Gastrocnemius medialis (tissue), 4 donors: ENCODE measurements at regions of chrX and their contacts with region 1.

Region 1: GRCh38 chrX:120560842-120561633 is at the start of gene CUL4B:
- DNase-seq: peak; percentile 85 to 92
- ATAC-seq: peak; percentile 91 to 94
- H3K4me3 ChIP-seq: peak within 1 kb of the TSS; percentile 72 to 86 (median 78)
- H3K27ac ChIP-seq: peak within 1 kb of the TSS; percentile 97 to 100 (median 98)
- H3K4me1 ChIP-seq: peaks cover 23 to 24% of the 10 kb centered on the region in 2 donors
- H3K27me3 ChIP-seq: no peaks in the 10 kb centered on the region
- CTCF ChIP-seq: no peak
- POLR2A ChIP-seq: peak; percentile 62 to 73
- total RNA-seq, gene CUL4B: 10.1 to 14.6 (median 11.9) TPM

Region 2: GRCh38 chrX:118974088-118974907 is 1586.7 kb before region 1 on chrX and contains the start of gene LONRF3:
- in situ Hi-C with region 1: no loop called
- intact Hi-C with region 1: loop called (anchors 10 kb)
- DNase-seq: peak; percentile 73 to 85
- ATAC-seq: peak; percentile 61 to 65
- H3K4me3 ChIP-seq: peak within 1 kb of the TSS; percentile 69 to 82 (median 74)
- H3K27ac ChIP-seq: peak within 1 kb of the TSS; percentile 93 to 95 (median 93)
- H3K4me1 ChIP-seq: peaks cover 5 to 10% of the 10 kb centered on the region in 2 donors
- H3K27me3 ChIP-seq: no peaks in the 10 kb centered on the region
- CTCF ChIP-seq: no peak
- POLR2A ChIP-seq: peak; percentile 93 to 95
- total RNA-seq, gene LONRF3: 15.7 to 73.3 (median 42.3) TPM

Region 3: DNA sequence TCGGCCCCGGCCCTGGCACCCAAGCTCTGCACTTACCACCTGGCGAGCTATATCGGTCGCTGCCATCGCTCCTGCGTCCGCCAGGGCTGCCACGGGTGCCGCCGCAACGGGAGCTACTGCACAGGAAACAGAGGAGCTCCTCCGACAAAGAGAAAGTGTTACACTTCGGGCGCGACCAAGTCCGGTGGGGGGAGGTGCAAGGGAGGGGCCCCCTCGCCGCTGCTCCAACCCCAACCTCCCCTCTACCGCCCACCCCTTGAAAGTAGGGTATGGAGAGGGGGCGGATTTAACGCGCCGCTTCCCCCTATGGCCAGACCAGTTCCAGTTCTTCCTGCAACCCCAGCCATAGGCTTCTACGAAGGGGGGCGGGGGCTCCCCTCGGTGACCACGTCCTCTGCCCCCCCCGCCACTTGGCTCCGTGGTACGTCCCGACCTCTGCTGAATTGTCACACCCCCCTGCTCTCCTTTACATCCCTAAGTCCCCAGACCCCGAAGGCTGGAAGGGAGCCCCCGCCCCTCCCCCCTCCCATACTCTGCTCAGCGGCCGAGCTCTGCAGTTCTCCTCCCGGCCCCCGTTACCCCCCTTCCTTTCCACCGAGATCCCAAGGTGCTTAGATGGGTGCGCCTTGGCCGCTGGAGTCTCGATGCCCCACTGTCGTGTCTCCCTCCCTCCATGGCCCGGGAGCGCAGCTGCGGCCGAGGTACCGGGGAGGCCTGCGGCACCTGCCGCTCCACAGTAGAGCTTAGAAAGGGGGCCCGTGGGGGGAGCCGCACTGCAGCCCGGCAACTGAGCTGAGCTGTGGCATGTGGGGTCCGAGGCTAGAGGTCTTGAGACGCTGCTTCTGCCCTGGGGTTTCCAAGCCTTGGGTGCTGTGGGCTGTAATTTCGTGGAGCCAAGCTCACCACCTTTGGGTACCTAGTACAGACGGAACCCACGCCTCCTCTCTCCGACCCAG is 867.7 kb before region 1 on chrX and contains the start of gene SEPTIN6:
- in situ Hi-C with region 1: no loop called
- intact Hi-C with region 1: no loop called
- DNase-seq: peak in 1 of 2 donors; percentile 38
- ATAC-seq: peak; percentile 56 to 80
- H3K4me3 ChIP-seq: peak within 1 kb of the TSS; percentile 59 to 74 (median 65)
- H3K27ac ChIP-seq: peak within 1 kb of the TSS; percentile 50 to 62 (median 56)
- H3K4me1 ChIP-seq: no peaks in the 10 kb centered on the region
- H3K27me3 ChIP-seq: no peaks in the 10 kb centered on the region
- CTCF ChIP-seq: no peak
- POLR2A ChIP-seq: peak; percentile 19 to 38
- total RNA-seq, gene SEPTIN6: 1.2 to 11.1 (median 3.5) TPM

Region 4: DNA sequence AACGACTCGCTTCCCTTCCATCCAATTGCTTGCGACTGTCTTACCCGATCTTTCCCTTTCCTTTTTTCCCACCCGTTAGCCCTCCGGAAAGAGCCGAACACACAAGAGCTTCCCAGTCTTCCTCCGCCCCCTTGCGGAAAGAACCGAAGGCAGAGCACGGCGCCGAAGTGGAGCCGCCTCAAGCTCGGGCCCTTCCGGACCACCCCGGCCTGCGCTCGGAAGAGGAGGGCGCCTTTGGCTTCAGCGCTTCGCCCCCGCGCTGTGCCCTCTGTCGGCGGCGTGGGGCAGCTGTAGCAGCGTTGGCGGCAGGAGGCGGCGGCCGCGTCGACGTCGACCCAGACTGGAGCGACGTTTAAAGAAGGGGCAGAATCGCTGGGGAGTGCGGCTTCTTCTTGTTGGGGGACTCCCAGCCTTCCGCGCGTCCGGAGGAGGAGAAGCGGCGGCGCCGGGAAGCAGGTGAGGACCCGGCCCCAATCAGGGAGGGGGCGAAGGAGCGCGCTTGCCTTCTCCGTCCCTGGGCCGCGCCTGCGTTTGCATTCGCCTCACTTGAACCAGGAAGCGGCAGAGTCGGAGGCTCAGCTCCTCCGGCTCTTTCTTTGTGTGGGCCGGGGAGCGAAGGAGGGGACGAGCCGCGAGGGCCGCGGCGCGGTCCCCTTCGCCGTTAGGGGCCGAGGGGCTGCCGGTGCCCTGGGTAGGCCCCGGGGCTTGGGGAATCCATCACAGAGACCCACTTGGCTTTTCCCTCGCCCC is 310.3 kb before region 1 on chrX and contains the start of gene ZBTB33:
- in situ Hi-C with region 1: no loop called
- intact Hi-C with region 1: loop called (anchors 5 kb)
- DNase-seq: peak; percentile 80 to 89
- ATAC-seq: peak; percentile 95 to 96
- H3K4me3 ChIP-seq: peak within 1 kb of the TSS; percentile 66 to 83 (median 81)
- H3K27ac ChIP-seq: peak within 1 kb of the TSS; percentile 89 to 94 (median 91)
- H3K4me1 ChIP-seq: peaks cover 0 to 5% of the 10 kb centered on the region in 2 donors
- H3K27me3 ChIP-seq: no peaks in the 10 kb centered on the region
- CTCF ChIP-seq: peak; percentile 60 to 74 (median 62)
- POLR2A ChIP-seq: peak; percentile 58 to 65
- total RNA-seq, gene ZBTB33: 9.2 to 12.4 (median 9.8) TPM

Region 5: GRCh38 chrX:120485638-120486520 is 75.2 kb before region 1 on chrX:
- in situ Hi-C with region 1: no loop called
- intact Hi-C with region 1: loop called (anchors 5 kb)
- DNase-seq: peak; percentile 56 to 81
- ATAC-seq: peak; percentile 97 to 99
- H3K4me3 ChIP-seq: peak overlapping the region; percentile 48 to 62 (median 60)
- H3K27ac ChIP-seq: peak overlapping the region; percentile 83 to 93 (median 86)
- H3K4me1 ChIP-seq: peaks cover 0 to 3% of the 10 kb centered on the region in 2 donors
- H3K27me3 ChIP-seq: no peaks in the 10 kb centered on the region
- CTCF ChIP-seq: peak; percentile 44 to 66 (median 58)
- POLR2A ChIP-seq: peak; percentile 8 to 15

Region 6: DNA sequence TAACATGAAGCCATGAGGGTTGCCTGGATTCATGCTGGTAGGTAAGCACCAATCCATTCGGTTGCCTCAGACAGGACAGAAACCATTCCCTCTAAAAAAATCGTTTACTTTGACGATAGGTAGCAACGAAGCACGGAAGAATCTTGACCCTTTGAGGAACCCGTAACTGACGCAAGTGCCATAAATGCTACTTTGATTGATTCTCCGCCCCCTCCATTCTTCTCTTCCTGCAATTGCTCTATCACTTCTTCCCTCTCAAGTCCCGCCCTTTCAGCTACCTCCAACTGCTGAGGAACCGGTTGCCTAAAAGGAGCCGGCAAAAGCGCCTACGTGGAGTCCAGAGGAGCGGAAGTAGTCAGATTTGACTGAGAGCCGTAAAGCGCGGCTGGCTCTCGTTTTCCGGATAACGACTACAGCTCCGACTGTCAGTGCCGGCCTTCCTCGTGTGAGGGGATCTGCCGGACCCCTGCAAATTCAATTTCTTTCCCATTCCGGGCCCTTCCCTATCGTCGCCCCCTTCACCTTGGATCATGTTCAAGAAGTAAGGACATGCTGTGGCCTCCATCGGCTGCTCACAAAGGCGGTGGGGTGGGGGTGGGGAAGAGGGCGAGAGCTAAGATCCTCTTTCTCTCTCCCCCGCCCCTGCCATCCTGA is 42.8 kb after region 1 on chrX and contains the start of gene MCTS1:
- in situ Hi-C with region 1: no loop called
- intact Hi-C with region 1: loop called (anchors 1 kb)
- DNase-seq: peak; percentile 69 to 84
- ATAC-seq: peak; percentile 95 to 97
- H3K4me3 ChIP-seq: peak within 1 kb of the TSS; percentile 67 to 77 (median 68)
- H3K27ac ChIP-seq: peak within 1 kb of the TSS; percentile 84 to 94 (median 93)
- H3K4me1 ChIP-seq: peaks cover 7 to 14% of the 10 kb centered on the region in 2 donors
- H3K27me3 ChIP-seq: no peaks in the 10 kb centered on the region
- CTCF ChIP-seq: no peak
- POLR2A ChIP-seq: peak; percentile 66 to 69
- total RNA-seq, gene MCTS1: 15.9 to 32.4 (median 26.0) TPM

Region 7: GRCh38 chrX:120614816-120615215 is 53.8 kb after region 1 on chrX:
- in situ Hi-C with region 1: loop called in 1 of 4 experiments (anchors 5 kb)
- intact Hi-C with region 1: no loop called
- DNase-seq: no peak
- ATAC-seq: no peak
- H3K4me3 ChIP-seq: no peak overlapping the region
- H3K27ac ChIP-seq: no peak overlapping the region
- H3K4me1 ChIP-seq: no peaks in the 10 kb centered on the region
- H3K27me3 ChIP-seq: no peaks in the 10 kb centered on the region
- CTCF ChIP-seq: no peak
- POLR2A ChIP-seq: no peak

Region 8: DNA sequence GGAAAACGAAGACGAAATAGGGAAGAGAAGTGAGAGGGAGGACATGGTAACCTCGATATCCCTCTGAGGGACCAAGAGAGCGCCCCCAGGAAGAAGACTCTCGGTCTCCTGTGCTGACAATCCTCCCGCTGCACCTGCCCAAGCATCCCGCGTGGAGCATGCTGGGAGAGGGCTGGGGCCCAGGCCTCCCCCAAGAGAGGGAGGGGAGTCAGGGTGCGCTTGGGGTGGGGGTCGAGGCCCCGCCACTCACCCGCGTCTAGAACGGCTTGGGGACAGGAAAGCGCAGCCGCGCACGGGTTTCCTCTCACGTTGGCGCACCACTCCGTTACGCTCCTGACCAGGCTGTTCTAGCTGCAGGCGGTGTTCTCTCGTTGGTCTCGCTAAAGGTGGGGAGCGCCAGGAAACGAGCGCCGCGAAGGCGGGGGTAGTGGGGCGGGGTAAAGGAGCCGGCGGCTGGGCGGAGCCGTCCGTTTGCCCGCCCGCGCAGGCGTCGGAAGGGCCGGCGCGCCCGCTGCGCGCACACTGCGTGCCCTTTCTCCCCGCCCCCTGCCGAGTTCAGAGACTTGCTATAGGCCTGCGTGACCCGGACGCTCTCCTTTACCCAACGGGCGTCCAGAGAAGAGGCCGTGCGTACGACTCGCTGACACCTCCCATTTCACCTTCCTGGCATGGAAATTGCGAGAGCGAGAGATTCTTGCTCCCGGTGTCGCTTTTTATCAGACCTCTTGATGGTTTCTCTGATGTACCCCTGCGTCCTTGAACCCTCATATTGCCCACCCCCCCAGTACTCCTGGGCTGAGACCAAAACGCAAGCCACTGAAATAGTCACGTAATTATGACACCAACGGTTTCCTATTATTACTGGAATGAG is 68.9 kb after region 1 on chrX and contains the start of gene C1GALT1C1:
- in situ Hi-C with region 1: no loop called
- intact Hi-C with region 1: loop called (anchors 1 kb)
- DNase-seq: peak; percentile 87 to 93
- ATAC-seq: peak; percentile 97 to 98
- H3K4me3 ChIP-seq: peak within 1 kb of the TSS; percentile 64 to 76 (median 70)
- H3K27ac ChIP-seq: peak within 1 kb of the TSS; percentile 88 to 94 (median 91)
- H3K4me1 ChIP-seq: no peaks in the 10 kb centered on the region
- H3K27me3 ChIP-seq: no peaks in the 10 kb centered on the region
- CTCF ChIP-seq: no peak
- POLR2A ChIP-seq: peak; percentile 59 to 68
- total RNA-seq, gene C1GALT1C1: 6.5 to 13.5 (median 10.2) TPM

Region 9: GRCh38 chrX:121000587-121000986 is 439.5 kb after region 1 on chrX:
- in situ Hi-C with region 1: no loop called
- intact Hi-C with region 1: no loop called
- DNase-seq: no peak
- ATAC-seq: no peak
- H3K4me3 ChIP-seq: no peak overlapping the region
- H3K27ac ChIP-seq: no peak overlapping the region
- H3K4me1 ChIP-seq: no peaks in the 10 kb centered on the region
- H3K27me3 ChIP-seq: no peaks in the 10 kb centered on the region
- CTCF ChIP-seq: no peak
- POLR2A ChIP-seq: no peak